A549 (cell line): ENCODE measurements at regions of chr3 and their contacts with region 1.

Region 1: GRCh38 chr3:94004301-94004910 is 24.0 kb downstream of the STX19 start:
- DNase-seq: peak; percentile 38 to 62
- ATAC-seq: peak; percentile 66 to 80; a peak in 4 of 6 replicates
- H3K4me3 ChIP-seq: no peak overlapping the region
- H3K27ac ChIP-seq: 0 out of 6 replicates have a peak overlapping the region, but pooled peaks of 1 of the 2 experiments have one; percentile 23
- H3K4me1 ChIP-seq: no peaks in the 10 kb centered on the region
- CTCF ChIP-seq: peak; percentile 86
- EP300 ChIP-seq: no peak
- POLR2A ChIP-seq: no peak
- RAD21 ChIP-seq: peak; percentile 66 to 67

Region 2: DNA sequence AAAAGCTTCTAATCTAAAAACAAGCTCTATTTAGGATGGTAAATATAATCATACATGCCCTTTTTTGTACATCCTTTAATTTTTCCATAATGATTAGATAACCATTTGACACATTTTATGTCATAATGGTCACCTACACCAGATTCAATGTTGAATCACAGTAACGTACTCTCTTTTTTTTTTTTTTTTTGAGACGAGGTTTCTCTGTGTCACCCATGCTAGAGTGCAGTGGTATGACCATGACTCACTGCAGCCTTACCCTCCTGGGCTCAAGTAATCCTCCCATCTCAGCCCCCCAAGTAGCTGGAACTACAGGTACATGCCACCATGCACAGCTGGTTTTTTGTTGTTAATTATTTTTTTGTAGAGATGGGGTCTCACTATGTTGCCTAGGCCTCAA is 79.9 kb before region 1 on chr3:
- CTCF ChIA-PET with region 1: no interaction called
- POLR2A ChIA-PET with region 1: no interaction called
- DNase-seq: no peak
- ATAC-seq: no peak
- H3K4me3 ChIP-seq: no peak overlapping the region
- H3K27ac ChIP-seq: no peak overlapping the region
- H3K4me1 ChIP-seq: no peaks in the 10 kb centered on the region
- CTCF ChIP-seq: no peak
- EP300 ChIP-seq: no peak
- POLR2A ChIP-seq: no peak
- RAD21 ChIP-seq: no peak

Region 3: GRCh38 chr3:94024385-94024784 is 20.0 kb after region 1 on chr3:
- CTCF ChIA-PET with region 1: no interaction called
- POLR2A ChIA-PET with region 1: no interaction called
- DNase-seq: no peak
- ATAC-seq: no peak
- H3K4me3 ChIP-seq: no peak overlapping the region
- H3K27ac ChIP-seq: no peak overlapping the region
- H3K4me1 ChIP-seq: no peaks in the 10 kb centered on the region
- CTCF ChIP-seq: no peak
- EP300 ChIP-seq: no peak
- POLR2A ChIP-seq: no peak
- RAD21 ChIP-seq: no peak

Region 4: DNA sequence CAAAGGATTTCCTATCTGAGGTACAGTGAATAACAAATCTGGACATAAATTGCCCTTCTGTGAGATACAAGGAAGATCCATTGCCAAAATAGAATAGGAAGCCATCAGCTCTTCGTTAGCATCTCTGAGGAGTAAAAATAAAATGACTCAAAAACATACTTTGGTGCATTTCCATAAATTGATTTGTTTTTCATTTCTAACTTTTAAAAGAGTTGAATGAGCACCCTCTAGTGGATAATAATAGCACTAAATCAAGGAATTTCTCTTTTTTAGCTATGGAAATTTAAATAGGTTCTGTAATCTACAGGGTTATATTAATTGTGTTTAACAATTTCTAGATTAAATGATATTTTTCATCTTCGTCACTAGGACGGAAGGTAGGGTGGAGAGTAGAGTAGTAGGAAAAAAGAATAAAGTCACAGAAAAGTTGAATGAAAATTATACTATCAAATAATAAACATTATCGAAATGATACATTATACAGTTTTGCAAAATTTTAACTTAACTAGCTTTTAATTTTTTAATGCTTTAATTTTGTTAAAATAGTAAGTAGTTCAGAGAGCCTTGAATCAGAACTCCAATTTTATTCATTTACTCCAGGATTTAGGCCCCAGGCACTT is 64.9 kb after region 1 on chr3:
- CTCF ChIA-PET with region 1: interaction called, 28 read pairs
- POLR2A ChIA-PET with region 1: no interaction called
- DNase-seq: peak in 1 of 2 experiments; percentile 10
- ATAC-seq: no peak
- H3K4me3 ChIP-seq: no peak overlapping the region
- H3K27ac ChIP-seq: no peak overlapping the region
- H3K4me1 ChIP-seq: peaks cover 12% of the 10 kb centered on the region; the same call in 2 of the 3 replicates
- CTCF ChIP-seq: peak; percentile 65
- EP300 ChIP-seq: no peak
- POLR2A ChIP-seq: no peak
- RAD21 ChIP-seq: peak; percentile 52 to 55

Region 5: GRCh38 chr3:94130690-94131089 is 126.3 kb after region 1 on chr3:
- CTCF ChIA-PET with region 1: no interaction called
- POLR2A ChIA-PET with region 1: no interaction called
- DNase-seq: no peak
- ATAC-seq: no peak
- H3K4me3 ChIP-seq: no peak overlapping the region
- H3K27ac ChIP-seq: no peak overlapping the region
- H3K4me1 ChIP-seq: no peaks in the 10 kb centered on the region
- CTCF ChIP-seq: no peak
- EP300 ChIP-seq: no peak
- POLR2A ChIP-seq: no peak
- RAD21 ChIP-seq: no peak

Region 6: GRCh38 chr3:94184781-94185180 is 180.4 kb after region 1 on chr3:
- CTCF ChIA-PET with region 1: no interaction called
- POLR2A ChIA-PET with region 1: no interaction called
- DNase-seq: no peak
- ATAC-seq: no peak
- H3K4me3 ChIP-seq: no peak overlapping the region
- H3K27ac ChIP-seq: no peak overlapping the region
- H3K4me1 ChIP-seq: no peaks in the 10 kb centered on the region
- CTCF ChIP-seq: no peak
- EP300 ChIP-seq: no peak
- POLR2A ChIP-seq: no peak
- RAD21 ChIP-seq: no peak